ENCODE measurements at regions of chr7 and their contacts with region 1.

Region 1: GRCh38 chr7:50467817-50468610 is 17.9 kb upstream of the FIGNL1 start:
- DNase-seq: peak; percentile 83
- CTCF ChIP-seq: peak; percentile 82

Region 2: DNA sequence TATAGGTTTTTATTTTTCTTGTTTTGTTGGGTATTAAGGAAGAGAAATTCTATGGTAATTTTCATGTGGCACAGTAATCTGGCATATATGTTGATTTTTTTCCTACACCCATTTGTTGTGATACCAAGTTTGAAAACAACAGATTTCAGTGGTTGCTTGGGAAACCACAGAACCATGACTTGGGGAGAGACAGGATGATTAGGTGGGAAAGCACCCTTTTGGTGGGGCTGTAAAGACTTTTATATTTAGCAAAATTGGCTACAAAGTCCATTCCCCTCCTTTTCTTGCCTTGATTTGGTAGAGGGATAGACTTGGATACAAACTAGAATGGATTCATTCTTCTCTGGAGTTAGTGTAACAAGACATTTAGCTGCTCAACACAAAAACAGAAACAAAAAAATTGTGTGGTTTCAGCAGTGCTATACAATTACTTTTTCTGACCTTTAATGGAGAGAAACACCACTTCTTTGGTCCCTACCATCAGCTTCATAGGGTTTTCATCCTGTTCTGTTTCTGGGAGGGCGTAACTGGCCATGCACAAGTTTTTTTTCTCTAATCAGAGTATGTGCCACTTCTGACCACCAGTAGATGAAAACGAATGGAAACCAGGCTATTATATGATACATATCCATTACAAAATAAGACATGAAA is 70.6 kb before region 1 on chr7:
- CTCF ChIA-PET with region 1: no interaction called
- POLR2A ChIA-PET with region 1: no interaction called
- DNase-seq: peak; percentile 47
- CTCF ChIP-seq: no peak

Region 3: GRCh38 chr7:50679218-50680007 is 211.4 kb after region 1 on chr7:
- CTCF ChIA-PET with region 1: interaction called, 27 read pairs
- POLR2A ChIA-PET with region 1: no interaction called
- DNase-seq: peak; percentile 52
- CTCF ChIP-seq: peak; percentile 45

Measured in GM10248 (cell line).